Sigmoid colon (tissue), 7 donors: ENCODE measurements at regions of chr2 and their contacts with region 1.

Region 1: GRCh38 chr2:72993147-72993932 is 76.0 kb downstream of the EMX1 start:
- DNase-seq: peak; percentile 35
- H3K4me3 ChIP-seq: no peak overlapping the region
- H3K27ac ChIP-seq: no peak overlapping the region
- H3K4me1 ChIP-seq: no peaks in the 10 kb centered on the region
- H3K27me3 ChIP-seq: no peaks in the 10 kb centered on the region
- CTCF ChIP-seq: peak; percentile 37 to 85 (median 68)
- EP300 ChIP-seq: no peak
- POLR2A ChIP-seq: no peak

Region 2: DNA sequence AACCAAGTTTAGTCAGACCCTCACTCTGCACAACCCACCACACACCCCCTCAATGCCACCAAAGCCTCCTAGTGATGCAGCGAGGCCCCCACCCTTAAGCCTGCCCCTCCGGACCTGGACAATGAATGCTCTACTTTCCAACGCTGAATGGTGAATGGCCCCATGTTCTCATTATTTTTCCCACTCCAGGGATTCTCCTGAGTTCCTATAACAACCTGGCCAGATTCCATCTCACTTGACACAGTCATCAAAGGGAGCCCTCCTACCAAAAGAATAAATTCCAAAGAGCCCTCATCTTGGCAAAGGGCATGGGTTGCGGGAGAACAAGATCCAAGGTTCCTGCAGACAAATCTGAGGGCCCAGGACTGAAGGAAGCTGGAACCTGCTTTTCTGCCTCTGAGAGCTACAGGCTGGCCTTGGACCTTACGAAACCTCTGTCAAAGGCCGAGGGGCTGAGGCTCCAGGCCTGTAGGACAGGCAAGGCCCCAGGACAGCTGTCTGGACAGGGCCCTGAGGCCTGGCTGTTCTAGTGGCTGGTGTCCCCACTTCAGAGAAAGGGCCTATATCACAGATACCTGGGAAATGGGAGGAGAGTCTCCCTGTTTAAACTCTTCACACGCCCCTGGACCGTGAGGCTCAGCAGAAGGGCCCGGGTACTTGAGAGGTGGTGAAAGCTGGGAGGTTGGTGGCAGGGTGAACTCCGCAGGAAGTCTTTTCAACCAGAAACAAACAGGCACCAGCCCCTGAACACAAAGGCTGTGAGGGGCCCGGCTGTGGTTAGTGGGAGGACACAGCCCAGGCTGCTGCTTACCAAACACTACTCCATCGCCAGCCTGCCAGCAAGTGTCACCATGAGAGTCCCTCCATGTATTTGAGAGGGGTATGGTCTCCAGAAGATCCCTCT is 50.8 kb after region 1 on chr2:
- intact Hi-C with region 1: no loop called
- DNase-seq: no peak
- H3K4me3 ChIP-seq: no peak overlapping the region
- H3K27ac ChIP-seq: no peak overlapping the region
- H3K4me1 ChIP-seq: no peaks in the 10 kb centered on the region
- H3K27me3 ChIP-seq: no peaks in the 10 kb centered on the region
- CTCF ChIP-seq: no peak
- EP300 ChIP-seq: no peak
- POLR2A ChIP-seq: no peak

Region 3: GRCh38 chr2:73134471-73134870 is 141.1 kb after region 1 on chr2:
- intact Hi-C with region 1: no loop called
- DNase-seq: no peak
- H3K4me3 ChIP-seq: no peak overlapping the region
- H3K27ac ChIP-seq: no peak overlapping the region
- H3K4me1 ChIP-seq: no peaks in the 10 kb centered on the region
- H3K27me3 ChIP-seq: no peaks in the 10 kb centered on the region
- CTCF ChIP-seq: no peak
- EP300 ChIP-seq: no peak
- POLR2A ChIP-seq: no peak

Region 4: GRCh38 chr2:73163483-73164367 is 170.4 kb after region 1 on chr2:
- intact Hi-C with region 1: loop called (anchors 5 kb)
- DNase-seq: peak; percentile 79
- H3K4me3 ChIP-seq: no peak overlapping the region
- H3K27ac ChIP-seq: no peak overlapping the region
- H3K4me1 ChIP-seq: no peaks in the 10 kb centered on the region
- H3K27me3 ChIP-seq: no peaks in the 10 kb centered on the region
- CTCF ChIP-seq: peak; percentile 66 to 86 (median 74)
- EP300 ChIP-seq: no peak
- POLR2A ChIP-seq: no peak